Natural killer cell (primary cell): ENCODE measurements at regions of chr9 and their contacts with region 1.

Region 1: GRCh38 chr9:2132484-2133082 is 117.4 kb downstream of the SMARCA2 start:
- DNase-seq: peak in 1 of 2 donors; percentile 28
- ATAC-seq: peak in 1 of 3 donors; percentile 44
- H3K4me3 ChIP-seq: no peak overlapping the region
- H3K4me3 Mint-ChIP-seq: no peak overlapping the region
- H3K27ac ChIP-seq: no peak overlapping the region
- H3K27ac Mint-ChIP-seq: peak overlapping the region; percentile 19 to 41
- H3K4me1 ChIP-seq: no peaks in the 10 kb centered on the region
- H3K4me1 Mint-ChIP-seq: peaks cover 43 to 60% of the 10 kb centered on the region in 2 donors
- H3K27me3 ChIP-seq: no peaks in the 10 kb centered on the region
- H3K27me3 Mint-ChIP-seq: no peaks in the 10 kb centered on the region
- CTCF ChIP-seq: peak; percentile 72

Region 2: GRCh38 chr9:2116073-2116472 is 16.5 kb before region 1 on chr9:
- intact Hi-C with region 1: no loop called
- DNase-seq: no peak
- ATAC-seq: no peak
- H3K4me3 ChIP-seq: no peak overlapping the region
- H3K4me3 Mint-ChIP-seq: no peak overlapping the region
- H3K27ac ChIP-seq: no peak overlapping the region
- H3K27ac Mint-ChIP-seq: no peak overlapping the region
- H3K4me1 ChIP-seq: no peaks in the 10 kb centered on the region
- H3K4me1 Mint-ChIP-seq: no peaks in the 10 kb centered on the region
- H3K27me3 ChIP-seq: no peaks in the 10 kb centered on the region
- H3K27me3 Mint-ChIP-seq: no peaks in the 10 kb centered on the region
- CTCF ChIP-seq: peak; percentile 11

Region 3: GRCh38 chr9:2179567-2179966 is 47.0 kb after region 1 on chr9:
- intact Hi-C with region 1: loop called (anchors 1 kb)
- DNase-seq: peak in 1 of 2 donors; percentile 12
- ATAC-seq: peak in 2 of 3 donors; percentile 59 to 65
- H3K4me3 ChIP-seq: no peak overlapping the region
- H3K4me3 Mint-ChIP-seq: no peak overlapping the region
- H3K27ac ChIP-seq: no peak overlapping the region
- H3K27ac Mint-ChIP-seq: peak overlapping the region; percentile 27 to 77
- H3K4me1 ChIP-seq: no peaks in the 10 kb centered on the region
- H3K4me1 Mint-ChIP-seq: peaks cover 15 to 22% of the 10 kb centered on the region in 2 donors
- H3K27me3 ChIP-seq: no peaks in the 10 kb centered on the region
- H3K27me3 Mint-ChIP-seq: no peaks in the 10 kb centered on the region
- CTCF ChIP-seq: no peak

Region 4: GRCh38 chr9:2837915-2838314 is 705.3 kb after region 1 on chr9:
- intact Hi-C with region 1: loop called (anchors 5 kb)
- DNase-seq: peak in 1 of 2 donors; percentile 6
- ATAC-seq: peak in 1 of 3 donors; percentile 40
- H3K4me3 ChIP-seq: no peak overlapping the region
- H3K4me3 Mint-ChIP-seq: no peak overlapping the region
- H3K27ac ChIP-seq: no peak overlapping the region
- H3K27ac Mint-ChIP-seq: peak overlapping the region; percentile 3 to 46
- H3K4me1 ChIP-seq: no peaks in the 10 kb centered on the region
- H3K4me1 Mint-ChIP-seq: peaks cover 15 to 22% of the 10 kb centered on the region in 2 donors
- H3K27me3 ChIP-seq: no peaks in the 10 kb centered on the region
- H3K27me3 Mint-ChIP-seq: no peaks in the 10 kb centered on the region
- CTCF ChIP-seq: peak; percentile 28